Mucosa of descending colon (tissue), 3 donors: ENCODE measurements at regions of chr5 and their contacts with region 1.

Region 1: GRCh38 chr5:131634996-131635754 is at the start of gene RAPGEF6:
- DNase-seq: peak; percentile 96 to 99 (median 97)
- ATAC-seq: peak; percentile 95
- H3K4me3 ChIP-seq: peak within 1 kb of the TSS; percentile 51
- H3K4me1 ChIP-seq: peaks cover 43% of the 10 kb centered on the region
- CTCF ChIP-seq: no peak
- total RNA-seq, gene RAPGEF6: 21.4 to 22.1 (median 21.5) TPM

Region 2: GRCh38 chr5:131589510-131590348 is 45.4 kb before region 1 on chr5:
- intact Hi-C with region 1: no loop called
- DNase-seq: peak in 2 of 3 donors; percentile 31 to 47
- ATAC-seq: peak; percentile 97
- H3K4me3 ChIP-seq: no peak overlapping the region
- H3K4me1 ChIP-seq: peaks cover 9% of the 10 kb centered on the region
- CTCF ChIP-seq: peak; percentile 33

Region 3: GRCh38 chr5:131796793-131797693 is 161.9 kb after region 1 on chr5 and contains the start of gene FNIP1:
- intact Hi-C with region 1: loop called in 1 of 2 experiments (anchors 5 kb)
- DNase-seq: peak; percentile 100
- ATAC-seq: peak; percentile 97
- H3K4me3 ChIP-seq: peak within 1 kb of the TSS; percentile 92
- H3K4me1 ChIP-seq: peaks cover 3% of the 10 kb centered on the region
- CTCF ChIP-seq: no peak
- total RNA-seq, gene FNIP1: 28.3 to 40.3 (median 33.2) TPM